Aorta (tissue), 5 donors: ENCODE measurements at regions of chr5 and their contacts with region 1.

Region 1: GRCh38 chr5:154287136-154287535 is 96.6 kb downstream of the GALNT10 start:
- DNase-seq: peak in 1 of 2 donors; percentile 49
- ATAC-seq: peak; percentile 75
- H3K4me3 ChIP-seq: no peak overlapping the region
- H3K27ac ChIP-seq: peak overlapping the region in 1 of 2 donors; percentile 62
- H3K4me1 ChIP-seq: peaks cover 0 to 4% of the 10 kb centered on the region in 2 donors
- H3K27me3 ChIP-seq: no peaks in the 10 kb centered on the region

Region 2: GRCh38 chr5:154238776-154239481 is 48.2 kb before region 1 on chr5:
- intact Hi-C with region 1: no loop called
- DNase-seq: no peak
- ATAC-seq: no peak
- H3K4me3 ChIP-seq: no peak overlapping the region
- H3K27ac ChIP-seq: no peak overlapping the region
- H3K4me1 ChIP-seq: no peaks in the 10 kb centered on the region
- H3K27me3 ChIP-seq: no peaks in the 10 kb centered on the region

Region 3: DNA sequence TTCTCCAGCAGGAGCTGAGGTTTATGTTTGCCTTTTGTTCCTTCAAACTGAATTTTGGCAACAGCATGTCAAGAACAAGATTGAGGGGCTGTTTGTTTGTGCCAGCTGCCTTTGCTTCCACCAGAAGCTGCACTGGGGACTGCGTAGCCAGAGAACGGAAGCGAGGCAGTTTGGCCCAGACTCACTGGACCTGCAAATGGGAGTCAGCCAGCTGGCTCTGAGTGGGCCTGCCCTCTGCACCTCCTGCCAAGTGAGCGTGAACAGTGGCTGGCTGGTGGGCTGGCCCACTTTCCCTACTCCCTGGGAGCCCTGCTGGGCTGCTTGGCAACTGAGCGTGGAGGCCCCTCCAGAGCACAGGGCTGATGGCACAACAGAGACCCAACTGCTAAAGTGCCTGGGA is 15.0 kb after region 1 on chr5:
- intact Hi-C with region 1: loop called in 1 of 2 experiments (anchors 1 kb)
- DNase-seq: peak; percentile 81 to 85
- ATAC-seq: peak; percentile 87
- H3K4me3 ChIP-seq: no peak overlapping the region
- H3K27ac ChIP-seq: peak overlapping the region in 1 of 2 donors; percentile 39
- H3K4me1 ChIP-seq: peaks cover 0 to 2% of the 10 kb centered on the region in 2 donors
- H3K27me3 ChIP-seq: no peaks in the 10 kb centered on the region